Astrocyte of the cerebellum (primary cell): ENCODE measurements at regions of chr7 and their contacts with region 1.

Region 1: GRCh38 chr7:15720849-15721471 is 34.5 kb upstream of the MEOX2 start:
- DNase-seq: peak; percentile 38
- H3K4me3 ChIP-seq: no peak overlapping the region
- CTCF ChIP-seq: peak; percentile 73

Region 2: GRCh38 chr7:14717816-14718215 is 1003.1 kb before region 1 on chr7:
- in situ Hi-C with region 1: loop called (anchors 25 kb)
- DNase-seq: peak; percentile 26
- H3K4me3 ChIP-seq: no peak overlapping the region
- CTCF ChIP-seq: no peak

Region 3: DNA sequence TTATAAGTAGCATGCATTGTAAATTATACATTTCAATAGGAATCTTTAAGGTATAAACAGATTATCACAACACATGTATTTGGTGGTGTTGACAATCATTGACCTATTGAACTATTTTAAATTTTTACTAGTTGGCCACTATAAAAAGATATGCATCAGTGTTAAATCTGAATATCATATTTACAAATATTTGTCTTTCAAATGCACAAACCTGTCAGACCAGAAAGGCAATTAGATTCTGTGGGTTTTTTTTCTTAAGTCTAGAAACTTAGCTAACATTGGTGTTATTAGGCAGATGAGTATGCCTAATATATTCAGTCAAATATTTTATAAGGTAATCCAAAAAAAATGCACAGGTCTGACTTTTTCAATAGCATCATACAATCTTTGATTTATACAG is 577.0 kb before region 1 on chr7:
- in situ Hi-C with region 1: no loop called
- DNase-seq: no peak
- H3K4me3 ChIP-seq: no peak overlapping the region
- CTCF ChIP-seq: no peak

Region 4: DNA sequence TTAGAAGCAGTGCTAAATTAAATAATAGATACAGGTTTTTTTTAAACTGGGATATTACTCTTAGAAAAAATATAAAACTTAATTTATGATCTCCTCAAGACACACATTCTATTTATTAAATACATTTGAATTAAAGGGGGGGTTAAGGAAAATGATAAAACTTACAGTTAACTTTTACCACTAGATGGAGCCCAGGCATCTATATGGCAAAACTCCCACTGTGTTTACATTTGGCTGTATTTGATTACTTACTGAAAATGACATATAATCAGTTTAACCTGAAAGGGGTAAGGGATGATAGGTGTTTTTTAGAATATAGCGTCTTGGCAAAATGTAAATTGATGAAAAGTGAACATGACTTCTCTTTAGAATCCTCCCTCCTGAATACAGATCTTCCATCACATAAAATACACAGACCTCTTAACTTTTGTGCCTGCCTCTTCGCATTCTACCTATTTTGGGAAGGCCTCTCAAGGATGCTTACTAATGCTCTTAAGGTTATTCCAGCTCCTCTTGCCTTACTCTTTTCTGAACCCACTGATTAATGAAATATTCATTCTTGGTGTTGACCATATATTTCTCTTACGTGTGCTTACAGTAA is 394.8 kb before region 1 on chr7:
- in situ Hi-C with region 1: loop called (anchors 25 kb)
- DNase-seq: peak; percentile 18
- H3K4me3 ChIP-seq: no peak overlapping the region
- CTCF ChIP-seq: peak; percentile 55

Region 5: DNA sequence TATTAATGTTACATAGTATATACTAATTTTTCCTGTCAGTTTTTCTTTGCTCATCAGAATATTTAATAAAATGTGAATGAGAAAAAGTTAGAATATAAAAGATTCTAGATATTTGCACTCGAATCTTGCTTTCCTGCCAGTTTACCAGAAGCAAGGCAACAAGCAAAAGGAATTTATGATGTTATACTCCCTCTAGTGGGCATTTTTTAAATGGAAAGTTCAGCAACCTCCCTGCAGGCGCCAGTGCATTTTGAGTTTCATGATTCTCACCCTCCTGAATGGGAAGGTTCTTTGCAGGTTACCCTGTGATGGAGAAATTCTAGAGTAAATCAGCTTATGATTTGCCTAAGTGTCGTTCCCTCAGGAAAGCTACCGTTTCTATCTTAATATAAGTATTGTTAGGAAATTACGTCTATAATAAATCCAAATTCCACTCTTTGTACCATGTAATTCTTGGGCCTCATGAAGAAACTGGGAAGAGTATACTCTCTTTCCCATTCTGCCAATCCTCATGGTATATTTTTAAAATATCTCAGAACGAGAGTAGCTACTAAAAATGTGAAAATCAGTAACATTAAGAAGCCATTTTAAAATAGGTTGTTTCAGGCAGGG is 350.4 kb after region 1 on chr7:
- in situ Hi-C with region 1: loop called (anchors 25 kb)
- DNase-seq: peak; percentile 60
- H3K4me3 ChIP-seq: no peak overlapping the region
- CTCF ChIP-seq: peak; percentile 60

Region 6: GRCh38 chr7:16178092-16178491 is 457.1 kb after region 1 on chr7:
- in situ Hi-C with region 1: no loop called
- DNase-seq: no peak
- H3K4me3 ChIP-seq: no peak overlapping the region
- CTCF ChIP-seq: no peak